Activated T-helper 1 cell treated with anti-CD3 and anti-CD28 coated beads, Interleukin-12 subunit alpha, Interleukin-12 subunit beta, Interleukin-2, Interleukin-4 antibody, amounts not matched to agents 30 ng/mL and 10 ng/mL and 1 ng/mL, durations not matched to agents 14 hours and 24 hours and 36 hours (primary cell): ENCODE measurements at regions of chr1 and their contacts with region 1.

Region 1: GRCh38 chr1:23577056-23578004 is 18.0 kb upstream of the ID3 start:
- DNase-seq: no peak
- H3K4me3 Mint-ChIP-seq: peak overlapping the region; percentile 45
- H3K27ac Mint-ChIP-seq: peak overlapping the region; percentile 61
- H3K4me1 Mint-ChIP-seq: peaks cover 30% of the 10 kb centered on the region
- H3K27me3 Mint-ChIP-seq: peaks cover 2% of the 10 kb centered on the region

Region 2: GRCh38 chr1:23591460-23592208 is 14.3 kb after region 1 on chr1:
- intact Hi-C with region 1: loop called (anchors 1 kb)
- DNase-seq: no peak
- H3K4me3 Mint-ChIP-seq: peak overlapping the region; percentile 53
- H3K27ac Mint-ChIP-seq: peak overlapping the region; percentile 93
- H3K4me1 Mint-ChIP-seq: peaks cover 46% of the 10 kb centered on the region
- H3K27me3 Mint-ChIP-seq: peaks cover 2% of the 10 kb centered on the region

Region 3: DNA sequence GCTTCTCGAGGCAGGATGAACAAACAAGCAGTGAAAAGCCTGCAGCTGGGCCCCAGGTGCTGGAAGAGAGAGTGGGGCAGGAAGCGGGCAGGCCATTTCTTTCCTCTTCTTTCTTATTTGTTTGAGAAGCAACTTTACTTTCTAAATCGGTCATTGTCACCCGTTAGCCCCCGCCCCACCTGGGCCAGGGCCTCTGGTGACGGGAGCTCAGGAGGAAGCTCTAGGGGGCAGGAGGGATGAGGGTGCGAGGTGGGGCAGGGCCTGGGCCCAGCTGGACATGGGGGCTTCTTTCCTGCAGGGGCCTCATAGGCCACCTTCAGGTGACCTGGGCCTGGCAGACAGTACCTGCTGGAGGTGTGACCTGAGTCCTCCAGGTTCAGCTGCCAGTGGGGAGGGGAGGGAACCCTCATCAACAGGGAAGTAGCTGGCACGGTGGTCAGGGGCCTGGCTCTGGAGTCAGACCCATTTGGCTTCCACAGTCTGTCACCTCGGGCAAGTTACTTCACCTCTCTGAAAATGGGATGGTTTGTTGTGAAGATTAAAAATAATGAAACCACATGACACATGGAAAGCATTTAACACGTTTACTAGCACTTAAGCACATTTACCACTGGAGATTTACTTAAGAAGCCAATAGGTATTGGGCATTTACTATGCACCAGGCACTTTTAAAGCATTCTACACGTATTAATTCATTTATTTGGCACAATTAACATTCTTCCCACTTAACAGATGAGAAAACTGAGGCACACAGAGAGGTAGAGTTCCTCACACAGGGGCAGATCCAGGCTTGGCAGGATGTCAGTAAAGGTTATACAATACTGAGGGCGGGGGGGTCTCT is 36.1 kb after region 1 on chr1:
- intact Hi-C with region 1: loop called (anchors 1 kb)
- DNase-seq: peak; percentile 47
- H3K4me3 Mint-ChIP-seq: peak overlapping the region; percentile 35
- H3K27ac Mint-ChIP-seq: peak overlapping the region; percentile 90
- H3K4me1 Mint-ChIP-seq: peaks cover 64% of the 10 kb centered on the region
- H3K27me3 Mint-ChIP-seq: peaks cover 2% of the 10 kb centered on the region

Region 4: GRCh38 chr1:23619299-23620188 is 42.2 kb after region 1 on chr1:
- intact Hi-C with region 1: loop called (anchors 1 kb)
- DNase-seq: peak; percentile 55
- H3K4me3 Mint-ChIP-seq: peak overlapping the region; percentile 67
- H3K27ac Mint-ChIP-seq: peak overlapping the region; percentile 69
- H3K4me1 Mint-ChIP-seq: peaks cover 72% of the 10 kb centered on the region
- H3K27me3 Mint-ChIP-seq: no peaks in the 10 kb centered on the region